ENCODE measurements at regions of chr14 and their contacts with region 1.

Region 1: DNA sequence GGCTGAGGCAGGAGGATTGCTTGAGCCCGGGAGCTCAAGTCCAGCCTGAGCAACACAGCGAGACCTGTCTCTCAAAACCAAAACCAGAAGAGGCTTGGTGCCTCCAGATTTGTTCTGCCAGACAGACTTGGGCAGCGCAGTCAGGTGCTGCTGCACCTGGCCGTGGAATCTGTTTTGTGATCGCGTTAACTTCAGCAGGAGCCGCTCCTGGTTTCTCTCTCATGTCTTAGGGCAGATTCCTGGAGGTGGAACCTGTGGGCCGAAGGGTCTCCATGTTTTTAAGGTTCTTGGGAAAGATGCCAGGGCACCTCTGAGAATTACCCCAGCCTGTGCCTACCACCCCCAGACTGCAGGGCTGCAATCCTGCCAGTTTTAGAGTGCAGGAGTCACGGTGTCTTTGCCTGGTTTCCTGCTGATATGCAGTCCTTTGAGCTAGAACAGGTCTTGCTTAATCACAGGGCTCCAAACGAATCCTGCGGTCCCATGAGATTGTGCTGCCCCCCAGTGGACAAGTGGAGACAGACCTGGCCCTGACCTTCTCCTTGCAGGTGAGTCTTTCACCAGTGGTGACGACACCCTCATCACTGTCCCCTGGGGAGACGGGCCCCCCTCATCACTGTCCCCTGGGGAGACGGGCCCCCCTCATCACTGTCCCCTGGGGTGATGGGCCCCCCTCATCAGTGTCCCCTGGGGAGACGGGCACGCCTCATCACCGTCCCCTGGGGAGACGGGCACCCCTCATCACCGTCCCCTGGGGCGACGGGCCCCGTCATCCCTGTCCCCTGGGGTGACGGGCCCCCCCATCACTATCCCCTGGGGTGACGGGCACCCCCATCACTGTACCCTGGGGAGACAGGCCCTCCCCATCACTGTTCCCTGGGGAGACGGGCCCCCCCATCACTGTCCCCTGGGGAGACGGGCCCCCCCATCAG is 37.6 kb downstream of the PACS2 start:
- DNase-seq: peak; percentile 92

Region 2: DNA sequence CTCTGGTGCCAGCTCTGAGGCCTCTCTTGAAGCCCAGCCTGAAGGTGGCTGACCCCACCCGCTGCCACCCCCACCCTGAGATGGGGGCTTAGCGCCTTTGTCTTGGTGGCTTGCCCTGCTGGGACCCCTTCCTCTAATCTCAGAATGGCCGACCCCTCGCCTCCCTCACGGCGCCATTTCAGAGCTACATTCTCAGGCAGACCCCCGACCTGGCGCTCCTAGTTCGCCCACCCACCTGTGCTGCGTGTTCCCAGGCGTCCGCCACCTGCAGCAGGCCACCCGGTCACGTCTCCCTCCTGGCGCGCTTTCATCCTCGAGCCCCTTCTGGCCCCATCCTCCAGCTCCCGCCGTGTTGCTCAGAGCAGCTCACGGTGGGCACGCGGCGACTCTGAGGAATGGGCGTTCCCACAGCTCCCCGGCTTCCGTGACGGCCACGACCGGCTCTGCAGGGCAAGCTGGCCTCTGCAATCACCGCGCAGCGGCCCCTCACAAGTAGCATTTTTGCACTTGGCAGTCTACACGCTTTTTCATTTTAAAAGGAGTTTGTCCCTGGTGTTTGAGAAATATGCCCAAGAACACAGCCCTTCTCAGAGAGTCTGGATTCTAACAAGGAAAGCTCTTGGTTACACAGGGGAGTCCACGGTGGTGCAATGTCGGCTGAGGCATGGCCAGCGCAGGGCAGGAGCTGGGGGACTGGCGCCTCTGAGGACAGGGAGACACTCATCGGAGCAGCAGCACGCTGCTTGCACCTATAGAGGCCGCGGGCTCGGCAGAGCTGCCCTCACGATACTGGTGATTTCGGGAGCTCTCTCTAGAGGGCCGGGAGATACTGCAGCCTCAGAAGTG is 878.3 kb before region 1 on chr14:
- intact Hi-C with region 1: no loop called
- DNase-seq: no peak

Region 3: DNA sequence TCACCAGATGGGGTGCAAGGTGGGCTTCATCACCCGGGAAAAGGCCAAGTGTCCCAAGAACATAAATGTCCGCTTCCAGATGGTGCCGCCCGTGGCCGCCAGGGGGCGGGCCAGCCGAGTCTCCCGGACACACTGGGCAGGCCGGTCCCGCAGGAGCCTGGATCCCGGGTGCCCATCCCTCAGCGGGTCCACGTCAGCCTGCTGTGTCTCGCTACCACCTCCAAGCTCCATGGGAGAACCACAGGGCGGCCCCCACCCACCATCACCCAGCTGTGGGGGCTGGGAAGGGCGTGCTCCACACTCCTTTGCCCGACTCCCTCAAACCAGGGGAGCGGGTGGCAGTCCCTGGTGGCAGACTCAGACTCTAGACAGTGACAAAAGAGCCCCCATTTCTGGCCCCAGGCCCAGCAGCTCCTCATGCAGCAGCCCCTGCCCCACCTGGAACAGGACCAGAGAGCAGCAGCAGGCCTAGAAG is 149.1 kb before region 1 on chr14:
- intact Hi-C with region 1: loop called (anchors 2 kb)
- DNase-seq: no peak

Region 4: DNA sequence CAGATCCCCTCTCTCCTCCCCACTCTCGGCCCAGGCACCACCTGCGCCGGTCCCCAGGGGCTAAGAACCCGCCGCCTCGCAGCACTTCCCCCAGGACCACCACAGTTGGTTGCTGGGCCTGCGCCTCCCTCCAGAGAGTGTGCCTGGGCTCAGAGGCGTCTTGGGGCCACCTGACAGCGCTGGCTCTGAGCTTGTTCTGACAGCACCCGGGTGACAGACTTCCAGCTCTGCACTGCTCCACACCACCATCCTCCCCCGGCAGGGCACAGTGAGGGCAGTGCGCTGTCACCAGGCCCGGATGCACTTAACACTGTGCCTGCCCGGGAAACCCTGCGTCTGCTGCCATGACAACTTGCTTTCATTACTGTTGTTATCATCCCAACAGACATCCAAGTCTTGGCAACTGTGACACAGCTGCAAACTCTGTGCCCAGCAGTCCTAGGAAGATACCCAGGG is 58.0 kb before region 1 on chr14:
- intact Hi-C with region 1: loop called (anchors 10 kb)
- DNase-seq: peak; percentile 88

Region 5: GRCh38 chr14:105314287-105315200 is 37.6 kb before region 1 on chr14 and contains the start of gene PACS2:
- intact Hi-C with region 1: loop called (anchors 5 kb)
- DNase-seq: no peak
- total RNA-seq, gene PACS2: 55.1 TPM

Region 6: GRCh38 chr14:105627711-105628110 is 275.5 kb after region 1 on chr14:
- intact Hi-C with region 1: no loop called
- DNase-seq: no peak